ENCODE measurements at regions of chr5 and their contacts with region 1.

Region 1: DNA sequence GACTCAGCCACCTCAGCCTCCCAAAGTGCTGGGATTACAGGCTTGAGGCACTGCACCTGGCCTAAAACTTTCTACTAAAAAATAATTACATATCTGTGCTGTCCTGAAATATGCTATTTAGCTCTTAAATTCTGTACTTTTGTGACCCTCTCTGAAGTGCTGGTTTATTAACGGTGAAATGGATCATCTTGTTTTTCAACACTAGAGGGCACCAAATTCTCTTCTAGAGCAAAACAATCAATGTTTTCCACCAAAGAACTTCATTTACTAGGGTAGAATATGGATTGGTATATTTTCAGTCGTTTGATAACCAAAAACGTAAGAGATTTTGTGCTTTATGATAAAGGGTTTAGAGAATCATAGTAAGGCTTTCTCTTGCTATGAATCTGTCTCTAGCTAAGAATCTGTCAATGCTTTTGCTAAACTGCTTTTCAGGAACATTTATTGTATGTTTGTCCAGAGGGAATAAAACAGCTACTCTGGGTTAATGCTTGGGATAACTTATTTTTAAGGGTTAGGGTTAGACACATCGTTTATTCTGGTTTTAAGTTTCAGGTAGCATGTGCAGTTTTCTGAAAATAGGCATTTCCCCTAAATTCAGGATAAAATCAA is 63.6 kb downstream of the RNF180 start:
- DNase-seq: peak; percentile 39
- ATAC-seq: peak; percentile 48; the same call in 1 of the 2 replicates
- H3K4me3 ChIP-seq: no peak overlapping the region
- H3K27ac ChIP-seq: no peak overlapping the region
- H3K4me1 ChIP-seq: no peaks in the 10 kb centered on the region
- H3K27me3 ChIP-seq: no peaks in the 10 kb centered on the region
- CTCF ChIP-seq: peak; percentile 62
- POLR2A ChIP-seq: no peak
- RAD21 ChIP-seq: peak; percentile 51

Region 2: GRCh38 chr5:63602971-63603370 is 626.3 kb before region 1 on chr5:
- CTCF ChIA-PET with region 1: no interaction called
- POLR2A ChIA-PET with region 1: no interaction called
- dilution Hi-C with region 1: no loop called
- in situ Hi-C with region 1: no loop called
- intact Hi-C with region 1: no loop called
- DNase-seq: no peak
- ATAC-seq: no peak
- H3K4me3 ChIP-seq: no peak overlapping the region
- H3K27ac ChIP-seq: no peak overlapping the region
- H3K4me1 ChIP-seq: no peaks in the 10 kb centered on the region
- H3K27me3 ChIP-seq: no peaks in the 10 kb centered on the region
- CTCF ChIP-seq: no peak
- POLR2A ChIP-seq: no peak
- RAD21 ChIP-seq: no peak

Region 3: DNA sequence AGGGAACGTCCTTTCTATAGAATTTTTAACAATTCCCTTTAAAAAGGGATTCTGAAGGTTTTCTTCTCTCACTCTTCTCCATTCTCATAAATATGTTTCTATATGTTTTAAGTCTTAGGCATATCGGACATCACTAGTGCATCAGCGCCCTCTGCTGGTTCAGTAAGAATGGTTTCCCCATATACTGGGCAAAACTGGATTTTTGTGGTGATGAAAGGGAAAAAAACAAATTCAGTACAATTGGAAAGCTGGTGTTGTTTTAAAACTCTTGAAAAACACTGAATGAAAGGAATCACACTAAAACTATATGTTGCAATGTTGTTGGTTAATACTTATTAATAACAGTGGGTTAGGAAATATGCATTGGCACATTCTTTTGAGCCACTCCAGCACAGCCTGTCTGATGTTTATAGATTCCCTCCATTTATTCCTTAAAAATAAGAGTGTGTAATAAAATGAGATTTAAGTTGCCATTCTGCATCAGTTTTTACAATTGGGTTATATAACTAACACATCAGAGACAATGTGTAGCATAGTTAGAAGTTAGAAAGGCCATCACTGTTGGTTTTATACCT is 555.3 kb after region 1 on chr5:
- CTCF ChIA-PET with region 1: no interaction called
- POLR2A ChIA-PET with region 1: no interaction called
- dilution Hi-C with region 1: no loop called
- in situ Hi-C with region 1: loop called (anchors 25 kb)
- intact Hi-C with region 1: no loop called
- DNase-seq: peak; percentile 86
- ATAC-seq: peak; percentile 93
- H3K4me3 ChIP-seq: no peak overlapping the region
- H3K27ac ChIP-seq: no peak overlapping the region
- H3K4me1 ChIP-seq: no peaks in the 10 kb centered on the region
- H3K27me3 ChIP-seq: no peaks in the 10 kb centered on the region
- CTCF ChIP-seq: peak; percentile 84
- POLR2A ChIP-seq: no peak
- RAD21 ChIP-seq: peak; percentile 85

Region 4: GRCh38 chr5:65434122-65434521 is 1204.9 kb after region 1 on chr5:
- CTCF ChIA-PET with region 1: no interaction called
- POLR2A ChIA-PET with region 1: no interaction called
- dilution Hi-C with region 1: no loop called
- in situ Hi-C with region 1: no loop called
- intact Hi-C with region 1: no loop called
- DNase-seq: no peak
- ATAC-seq: no peak
- H3K4me3 ChIP-seq: no peak overlapping the region
- H3K27ac ChIP-seq: no peak overlapping the region
- H3K4me1 ChIP-seq: no peaks in the 10 kb centered on the region
- H3K27me3 ChIP-seq: no peaks in the 10 kb centered on the region
- CTCF ChIP-seq: no peak
- POLR2A ChIP-seq: no peak
- RAD21 ChIP-seq: no peak